ENCODE measurements at regions of chr6 and their contacts with region 1.

Region 1: GRCh38 chr6:157667211-157668008 is 155.6 kb upstream of the SNX9 start:
- H3K4me3 Mint-ChIP-seq: peak overlapping the region; percentile 42
- H3K27ac Mint-ChIP-seq: peak overlapping the region; percentile 80
- H3K4me1 Mint-ChIP-seq: peaks cover 31% of the 10 kb centered on the region
- H3K27me3 Mint-ChIP-seq: no peaks in the 10 kb centered on the region

Region 2: DNA sequence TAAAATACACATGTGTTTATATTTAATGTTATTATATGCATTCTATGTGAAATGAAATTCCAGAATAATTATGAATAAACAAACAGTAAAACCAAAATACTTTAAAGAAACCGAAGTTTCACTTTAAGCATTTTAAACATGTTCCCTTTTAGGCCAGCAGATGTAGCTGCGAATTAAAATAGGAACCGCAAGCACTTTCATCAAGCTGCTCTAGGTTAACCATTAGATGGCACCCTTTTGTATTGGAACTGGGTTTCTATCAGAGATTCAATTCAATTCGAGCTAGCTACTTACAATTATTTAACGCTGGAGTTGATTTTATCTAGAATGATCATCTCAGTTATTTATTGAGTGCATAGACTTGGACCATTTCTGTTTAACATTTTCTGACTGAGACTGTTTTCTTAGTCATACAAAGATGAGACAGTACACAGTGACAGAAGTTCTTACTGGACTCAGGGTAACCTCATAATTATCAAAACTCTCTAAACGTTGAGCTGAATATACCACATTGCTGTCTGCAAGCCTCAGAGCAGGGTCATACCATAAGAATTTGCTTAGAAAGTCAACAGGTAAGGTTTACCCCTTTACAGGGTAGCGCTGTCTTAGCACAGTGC is 352.6 kb before region 1 on chr6:
- intact Hi-C with region 1: loop called (anchors 1 kb)
- H3K4me3 Mint-ChIP-seq: no peak overlapping the region
- H3K27ac Mint-ChIP-seq: no peak overlapping the region
- H3K4me1 Mint-ChIP-seq: peaks cover 12% of the 10 kb centered on the region
- H3K27me3 Mint-ChIP-seq: no peaks in the 10 kb centered on the region

Region 3: DNA sequence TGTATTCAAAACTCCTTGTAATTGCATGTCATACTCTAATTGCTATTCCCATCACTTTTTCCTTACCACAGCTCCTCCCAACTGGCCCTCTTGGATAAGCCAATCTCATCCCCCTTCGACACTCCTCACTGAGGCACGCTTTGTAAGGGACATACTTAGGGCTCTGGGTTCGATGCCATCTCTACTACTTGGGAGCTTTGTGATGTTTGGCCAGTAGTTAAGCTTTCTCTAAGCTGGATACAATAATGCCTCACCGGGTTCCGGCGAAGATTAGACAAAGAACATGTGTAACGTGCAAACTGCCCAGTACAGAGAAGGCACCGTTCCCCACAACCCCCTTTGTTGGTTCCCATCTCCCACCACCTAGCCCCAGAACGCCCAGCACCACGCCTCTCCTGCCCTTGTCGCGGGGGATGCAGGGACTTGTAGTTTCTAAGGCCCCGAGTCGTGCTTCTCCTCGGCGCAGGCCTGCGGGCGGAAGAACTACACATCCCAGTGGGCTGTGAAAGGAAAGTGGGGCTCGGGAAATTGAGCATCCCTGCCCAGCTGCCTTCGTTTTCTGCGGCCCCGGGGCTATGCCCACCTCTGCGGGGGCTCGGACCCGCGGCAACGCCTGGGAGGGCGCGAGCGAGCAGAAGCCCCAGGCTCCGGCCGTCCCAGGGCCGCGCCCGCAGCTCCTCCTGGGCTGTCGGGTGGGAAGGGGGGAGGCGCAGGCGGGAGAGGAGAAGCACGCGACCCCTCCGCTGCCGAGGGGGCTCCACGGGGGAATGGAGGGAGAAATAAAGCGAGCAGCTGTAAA is 287.6 kb before region 1 on chr6:
- intact Hi-C with region 1: loop called (anchors 10 kb)
- H3K4me3 Mint-ChIP-seq: peak overlapping the region; percentile 84
- H3K27ac Mint-ChIP-seq: peak overlapping the region; percentile 83
- H3K4me1 Mint-ChIP-seq: peaks cover 25% of the 10 kb centered on the region
- H3K27me3 Mint-ChIP-seq: peaks cover 16% of the 10 kb centered on the region

Region 4: DNA sequence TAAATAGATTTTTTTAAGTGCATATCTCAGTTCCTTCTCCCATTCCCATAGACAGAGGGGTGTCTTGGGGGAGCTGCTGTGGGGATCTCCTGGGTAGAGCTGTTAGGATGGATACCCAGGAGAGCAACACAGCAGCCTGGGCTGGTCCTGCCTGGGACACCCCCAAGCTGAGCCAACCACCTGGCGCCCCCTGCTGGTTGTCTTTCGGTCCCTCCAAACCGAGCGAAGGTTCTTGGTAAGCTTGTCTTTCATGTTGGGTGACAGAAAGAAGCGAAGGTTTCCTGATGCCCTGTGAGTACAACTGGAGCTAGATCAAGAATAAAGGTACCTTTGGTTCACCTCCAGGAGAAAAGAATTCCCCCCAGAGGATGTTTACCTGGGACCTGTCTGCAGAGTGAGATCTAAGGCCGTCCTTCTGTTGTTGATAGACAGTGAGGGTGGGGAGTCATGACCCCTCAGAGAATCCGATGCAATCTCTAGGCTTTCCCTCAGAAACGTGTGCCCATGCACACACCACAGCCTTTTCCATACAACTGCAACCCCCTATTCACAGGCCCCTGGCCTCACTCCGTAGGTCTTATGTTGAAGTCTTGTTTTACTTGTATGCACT is 206.4 kb after region 1 on chr6:
- intact Hi-C with region 1: loop called (anchors 10 kb)
- H3K4me3 Mint-ChIP-seq: no peak overlapping the region
- H3K27ac Mint-ChIP-seq: no peak overlapping the region
- H3K4me1 Mint-ChIP-seq: no peaks in the 10 kb centered on the region
- H3K27me3 Mint-ChIP-seq: no peaks in the 10 kb centered on the region